ENCODE measurements at regions of chr16 and their contacts with region 1.

Region 1: DNA sequence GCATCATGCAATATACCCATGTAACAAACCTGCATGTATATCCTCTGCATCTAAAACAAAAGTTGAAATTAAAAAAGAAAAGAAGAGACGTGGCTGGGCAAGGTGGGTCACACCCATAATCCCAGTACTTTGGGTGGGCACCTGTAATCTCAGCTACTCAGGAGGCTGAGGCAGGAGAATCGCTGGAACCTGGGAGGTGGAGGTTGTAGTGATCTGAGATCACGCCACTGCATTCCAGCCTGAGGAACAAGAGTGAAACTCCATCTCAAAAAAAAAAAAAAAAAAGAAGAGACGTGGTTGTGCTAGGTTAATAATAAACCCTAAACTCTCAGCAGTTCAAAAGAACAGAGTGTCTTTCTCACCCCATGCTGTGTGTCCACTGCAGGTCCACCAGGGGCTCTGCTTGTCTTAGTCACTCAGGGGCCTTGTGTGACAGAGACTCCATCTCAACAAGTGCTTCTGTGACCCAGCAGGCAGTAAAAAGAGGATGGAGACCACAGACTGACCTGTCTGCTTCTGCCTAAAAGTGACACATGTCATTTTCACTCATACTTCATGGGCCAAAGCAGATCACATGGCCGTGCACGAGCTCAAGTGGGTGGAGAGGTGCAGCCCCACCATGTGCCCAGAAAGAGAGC is 22.3 kb upstream of the N4BP1 start:
- DNase-seq: no peak
- ATAC-seq: no peak
- H3K4me3 ChIP-seq: no peak overlapping the region
- H3K4me3 Mint-ChIP-seq: no peak overlapping the region
- H3K27ac ChIP-seq: no peak overlapping the region
- H3K27ac Mint-ChIP-seq: no peak overlapping the region
- H3K4me1 ChIP-seq: no peaks in the 10 kb centered on the region
- H3K4me1 Mint-ChIP-seq: peaks cover 6% of the 10 kb centered on the region
- H3K27me3 ChIP-seq: no peaks in the 10 kb centered on the region
- H3K27me3 Mint-ChIP-seq: no peaks in the 10 kb centered on the region
- CTCF ChIP-seq: no peak

Region 2: GRCh38 chr16:47141773-47142485 is 1490.3 kb before region 1 on chr16:
- CTCF ChIA-PET with region 1: interaction called, 4 read pairs
- POLR2A ChIA-PET with region 1: no interaction called
- intact Hi-C with region 1: loop called in 1 of 2 experiments (anchors 5 kb)
- DNase-seq: peak; percentile 63 to 87 (median 80)
- ATAC-seq: peak; percentile 77
- H3K4me3 ChIP-seq: peak overlapping the region; percentile 3 to 28
- H3K4me3 Mint-ChIP-seq: peak overlapping the region; percentile 76
- H3K27ac ChIP-seq: no peak overlapping the region
- H3K27ac Mint-ChIP-seq: no peak overlapping the region
- H3K4me1 ChIP-seq: peaks cover 12% of the 10 kb centered on the region
- H3K4me1 Mint-ChIP-seq: peaks cover 21% of the 10 kb centered on the region
- H3K27me3 ChIP-seq: peaks cover 3 to 5% of the 10 kb centered on the region in 2 experiments
- H3K27me3 Mint-ChIP-seq: peaks cover 22% of the 10 kb centered on the region
- CTCF ChIP-seq: peak; percentile 85

Region 3: DNA sequence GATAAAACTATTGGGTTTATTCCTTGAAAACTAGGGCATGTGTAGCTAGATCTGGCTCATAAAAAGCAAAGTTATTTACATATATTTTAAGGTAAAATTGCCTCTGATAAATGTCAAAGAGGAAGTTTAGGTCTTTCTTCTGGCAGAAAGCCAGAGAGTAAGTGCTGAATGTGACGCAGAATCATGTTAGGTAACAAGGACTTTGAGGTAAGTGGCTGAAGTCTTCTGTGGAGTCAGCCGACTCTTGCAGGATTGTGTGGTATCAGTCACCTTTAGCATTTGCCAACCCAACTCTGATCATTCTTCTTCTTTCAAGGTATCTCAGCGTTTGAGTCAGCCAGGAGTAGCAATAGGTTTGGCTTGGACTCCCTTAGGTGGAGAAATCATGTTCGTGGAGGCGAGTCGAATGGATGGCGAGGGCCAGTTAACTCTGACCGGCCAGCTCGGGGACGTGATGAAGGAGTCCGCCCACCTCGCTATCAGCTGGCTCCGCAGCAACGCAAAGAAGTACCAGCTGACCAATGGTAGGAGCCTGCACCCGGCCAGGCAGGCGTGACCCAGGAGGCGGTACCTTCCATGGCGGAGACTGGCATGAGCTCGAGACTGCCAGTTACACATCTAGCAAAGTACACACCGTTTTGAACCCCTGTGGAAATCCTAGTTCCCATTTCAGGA is 284.9 kb before region 1 on chr16:
- CTCF ChIA-PET with region 1: interaction called, 82 read pairs
- POLR2A ChIA-PET with region 1: no interaction called
- intact Hi-C with region 1: no loop called
- DNase-seq: peak in 2 of 9 experiments; percentile 13 to 50
- ATAC-seq: peak; percentile 60
- H3K4me3 ChIP-seq: no peak overlapping the region
- H3K4me3 Mint-ChIP-seq: no peak overlapping the region
- H3K27ac ChIP-seq: no peak overlapping the region
- H3K27ac Mint-ChIP-seq: peak overlapping the region; percentile 27
- H3K4me1 ChIP-seq: peaks cover 3% of the 10 kb centered on the region
- H3K4me1 Mint-ChIP-seq: peaks cover 9% of the 10 kb centered on the region
- H3K27me3 ChIP-seq: no peaks in the 10 kb centered on the region
- H3K27me3 Mint-ChIP-seq: no peaks in the 10 kb centered on the region
- CTCF ChIP-seq: no peak

Region 4: DNA sequence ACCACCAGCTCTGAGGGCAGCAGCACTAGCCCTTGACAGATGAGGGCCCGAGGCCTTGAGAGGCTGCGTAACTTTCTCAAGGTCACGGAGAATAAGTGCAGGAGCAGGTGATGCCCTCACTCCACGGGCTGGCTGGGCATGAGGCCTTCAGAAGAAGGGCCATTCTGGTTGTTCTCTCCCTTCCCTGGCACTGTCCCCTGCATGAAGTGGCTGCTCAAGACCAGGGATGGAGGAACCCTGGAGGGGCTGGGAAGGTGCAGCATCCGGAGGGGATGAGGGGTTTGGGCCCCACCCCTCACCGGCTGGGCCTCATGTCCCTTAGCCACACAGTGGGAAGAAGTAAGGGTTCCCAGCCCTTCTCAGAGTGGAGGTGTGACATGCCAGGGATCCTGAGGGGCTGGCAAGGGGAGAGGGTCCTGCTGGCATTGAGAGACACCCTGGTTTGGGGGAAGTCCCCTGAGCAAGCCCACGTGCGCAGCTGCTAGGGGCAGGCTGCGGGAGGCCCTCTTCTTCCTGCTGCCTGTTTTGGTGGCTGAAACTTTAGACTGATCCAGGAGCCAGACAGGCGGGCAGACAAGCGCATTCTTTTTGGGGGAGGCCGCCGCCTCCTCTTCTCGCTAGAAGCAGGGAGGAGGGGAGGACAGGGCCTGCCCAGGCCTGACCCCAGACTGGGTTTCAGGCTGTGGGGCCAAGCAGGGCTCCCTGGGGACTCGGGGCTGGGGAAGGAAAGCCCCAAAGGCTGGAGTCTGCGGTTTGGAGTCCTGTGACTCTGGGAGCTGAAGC is 96.2 kb before region 1 on chr16:
- CTCF ChIA-PET with region 1: interaction called, 11 read pairs
- POLR2A ChIA-PET with region 1: no interaction called
- intact Hi-C with region 1: no loop called
- DNase-seq: peak in 3 of 9 experiments; percentile 32 to 49 (median 48)
- ATAC-seq: peak; percentile 24
- H3K4me3 ChIP-seq: no peak overlapping the region
- H3K4me3 Mint-ChIP-seq: no peak overlapping the region
- H3K27ac ChIP-seq: no peak overlapping the region
- H3K27ac Mint-ChIP-seq: no peak overlapping the region
- H3K4me1 ChIP-seq: peaks cover 22% of the 10 kb centered on the region
- H3K4me1 Mint-ChIP-seq: peaks cover 20% of the 10 kb centered on the region
- H3K27me3 ChIP-seq: no peaks in the 10 kb centered on the region
- H3K27me3 Mint-ChIP-seq: no peaks in the 10 kb centered on the region
- CTCF ChIP-seq: no peak

Region 5: GRCh38 chr16:48609652-48610029 is 22.6 kb before region 1 on chr16:
- CTCF ChIA-PET with region 1: interaction called, 12 read pairs
- POLR2A ChIA-PET with region 1: interaction called, 5 read pairs
- intact Hi-C with region 1: no loop called
- DNase-seq: no peak
- ATAC-seq: peak; percentile 17
- H3K4me3 ChIP-seq: peak overlapping the region; percentile 81 to 88
- H3K4me3 Mint-ChIP-seq: peak overlapping the region; percentile 86
- H3K27ac ChIP-seq: peak overlapping the region; percentile 72 to 87
- H3K27ac Mint-ChIP-seq: peak overlapping the region; percentile 94
- H3K4me1 ChIP-seq: peaks cover 79% of the 10 kb centered on the region
- H3K4me1 Mint-ChIP-seq: peaks cover 40% of the 10 kb centered on the region
- H3K27me3 ChIP-seq: no peaks in the 10 kb centered on the region
- H3K27me3 Mint-ChIP-seq: no peaks in the 10 kb centered on the region
- CTCF ChIP-seq: no peak

Region 6: GRCh38 chr16:48676836-48677235 is 44.6 kb after region 1 on chr16:
- CTCF ChIA-PET with region 1: no interaction called
- POLR2A ChIA-PET with region 1: no interaction called
- intact Hi-C with region 1: no loop called
- DNase-seq: no peak
- ATAC-seq: no peak
- H3K4me3 ChIP-seq: no peak overlapping the region
- H3K4me3 Mint-ChIP-seq: no peak overlapping the region
- H3K27ac ChIP-seq: no peak overlapping the region
- H3K27ac Mint-ChIP-seq: no peak overlapping the region
- H3K4me1 ChIP-seq: no peaks in the 10 kb centered on the region
- H3K4me1 Mint-ChIP-seq: no peaks in the 10 kb centered on the region
- H3K27me3 ChIP-seq: peaks cover 0 to 2% of the 10 kb centered on the region in 2 experiments
- H3K27me3 Mint-ChIP-seq: peaks cover 6% of the 10 kb centered on the region
- CTCF ChIP-seq: no peak

Region 7: DNA sequence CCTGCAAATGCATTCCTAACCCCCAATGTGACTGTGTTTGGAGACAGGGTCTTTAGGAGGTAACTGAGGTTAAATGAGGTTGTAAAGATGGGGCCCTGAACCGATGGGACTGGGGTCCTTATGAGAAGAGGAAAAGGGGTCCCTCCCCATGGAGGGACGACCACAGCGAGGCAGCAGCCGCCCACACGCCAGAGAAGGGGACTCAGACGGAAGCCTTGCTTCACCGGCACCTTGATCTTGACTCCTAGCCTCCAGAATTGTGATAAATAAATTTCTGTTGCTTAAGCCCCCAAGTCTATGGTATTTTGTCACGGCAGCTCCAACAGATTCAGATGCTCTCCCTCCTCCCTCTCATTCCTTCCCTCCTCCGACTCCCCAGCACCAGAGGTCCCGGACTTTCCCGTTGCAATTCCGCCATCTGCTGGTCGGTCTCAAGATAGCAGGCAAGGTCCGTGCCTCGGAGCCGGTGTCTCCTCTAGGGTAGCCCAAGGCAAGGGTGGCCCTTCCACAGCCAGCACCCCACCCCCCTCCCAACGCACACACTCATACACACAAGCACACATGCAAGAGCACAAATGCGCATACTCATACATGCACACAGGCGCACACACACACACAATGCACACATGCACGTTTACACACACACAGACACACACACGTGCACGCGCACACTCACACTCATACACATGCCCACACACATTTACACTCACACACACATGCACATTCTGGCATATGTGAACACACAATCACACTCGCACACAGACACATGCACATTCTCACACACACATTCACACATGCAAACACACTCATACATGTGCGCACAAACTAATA is 718.2 kb after region 1 on chr16:
- CTCF ChIA-PET with region 1: no interaction called
- POLR2A ChIA-PET with region 1: no interaction called
- intact Hi-C with region 1: no loop called
- DNase-seq: peak in 7 of 9 experiments; percentile 7 to 38 (median 28)
- ATAC-seq: no peak
- H3K4me3 ChIP-seq: no peak overlapping the region
- H3K4me3 Mint-ChIP-seq: no peak overlapping the region
- H3K27ac ChIP-seq: no peak overlapping the region
- H3K27ac Mint-ChIP-seq: no peak overlapping the region
- H3K4me1 ChIP-seq: no peaks in the 10 kb centered on the region
- H3K4me1 Mint-ChIP-seq: no peaks in the 10 kb centered on the region
- H3K27me3 ChIP-seq: peaks cover 0 to 2% of the 10 kb centered on the region in 2 experiments
- H3K27me3 Mint-ChIP-seq: peaks cover 23% of the 10 kb centered on the region
- CTCF ChIP-seq: peak; percentile 20

Measured in CD8-positive, alpha-beta T cell (primary cell).